T-cell (primary cell): ENCODE measurements at regions of chr6 and their contacts with region 1.

Region 1: GRCh38 chr6:153976921-153977693 is 61.9 kb upstream of the OPRM1 start:
- DNase-seq: no peak
- ATAC-seq: no peak
- H3K4me3 ChIP-seq: no peak overlapping the region
- H3K4me3 Mint-ChIP-seq: no peak overlapping the region
- H3K27ac ChIP-seq: no peak overlapping the region
- H3K27ac Mint-ChIP-seq: no peak overlapping the region
- H3K4me1 ChIP-seq: no peaks in the 10 kb centered on the region
- H3K4me1 Mint-ChIP-seq: peaks cover 0 to 6% (median 4%) of the 10 kb centered on the region in 3 donors
- H3K27me3 ChIP-seq: no peaks in the 10 kb centered on the region
- H3K27me3 Mint-ChIP-seq: peaks cover 0 to 2% of the 10 kb centered on the region in 2 donors

Region 2: DNA sequence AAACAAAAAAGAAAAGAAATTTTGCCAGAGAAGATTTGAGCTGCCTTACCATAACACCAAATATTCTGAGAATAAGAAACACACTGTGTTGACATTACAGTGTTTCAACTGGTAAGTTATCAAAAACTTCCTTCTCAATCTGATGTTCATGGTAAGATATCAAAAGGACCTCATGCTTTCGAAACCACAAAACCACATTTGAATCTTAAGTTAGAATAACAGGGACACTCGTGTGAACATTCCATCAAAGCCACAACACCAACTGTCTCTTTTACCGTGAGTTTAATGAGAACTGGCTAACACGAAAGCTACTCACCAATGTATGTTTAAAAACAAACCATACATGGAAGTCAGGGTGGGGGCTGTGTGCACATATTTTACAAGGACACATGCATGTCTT is 11.1 kb before region 1 on chr6:
- CTCF ChIA-PET with region 1: no interaction called
- POLR2A ChIA-PET with region 1: interaction called, 3 to 10 read pairs
- DNase-seq: peak in 1 of 35 experiments; percentile 23
- ATAC-seq: peak in 2 of 4 experiments; percentile 43 to 59
- H3K4me3 ChIP-seq: no peak overlapping the region
- H3K4me3 Mint-ChIP-seq: peak overlapping the region in 1 of 3 donors; percentile 20
- H3K27ac ChIP-seq: no peak overlapping the region
- H3K27ac Mint-ChIP-seq: no peak overlapping the region
- H3K4me1 ChIP-seq: peaks cover 4% of the 10 kb centered on the region in 2 experiments
- H3K4me1 Mint-ChIP-seq: peaks cover 10 to 35% (median 12%) of the 10 kb centered on the region in 3 donors
- H3K27me3 ChIP-seq: no peaks in the 10 kb centered on the region
- H3K27me3 Mint-ChIP-seq: no peaks in the 10 kb centered on the region

Region 3: DNA sequence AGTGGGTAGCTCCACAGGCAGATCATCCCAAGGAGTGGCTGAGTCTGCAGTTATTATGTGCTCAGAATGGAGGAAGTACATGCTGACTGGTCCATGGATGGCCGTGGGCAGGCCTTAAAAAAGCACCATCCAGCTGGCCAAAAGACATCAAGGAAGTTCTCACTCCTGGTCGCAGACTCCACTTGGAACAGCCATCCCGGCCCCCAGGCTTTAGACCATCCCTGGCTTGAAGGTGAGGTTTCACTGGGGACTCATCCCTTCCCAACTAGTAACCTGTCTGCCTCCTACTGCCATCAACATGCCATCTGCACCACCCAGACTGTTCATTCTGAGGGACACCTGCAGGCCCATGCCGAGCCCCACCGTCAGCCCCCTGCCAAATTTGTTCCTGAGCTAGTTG is 25.8 kb after region 1 on chr6:
- CTCF ChIA-PET with region 1: no interaction called
- POLR2A ChIA-PET with region 1: no interaction called
- DNase-seq: no peak
- ATAC-seq: no peak
- H3K4me3 ChIP-seq: no peak overlapping the region
- H3K4me3 Mint-ChIP-seq: no peak overlapping the region
- H3K27ac ChIP-seq: no peak overlapping the region
- H3K27ac Mint-ChIP-seq: no peak overlapping the region
- H3K4me1 ChIP-seq: no peaks in the 10 kb centered on the region
- H3K4me1 Mint-ChIP-seq: no peaks in the 10 kb centered on the region
- H3K27me3 ChIP-seq: peaks cover 0 to 11% of the 10 kb centered on the region in 2 experiments
- H3K27me3 Mint-ChIP-seq: peaks cover 5 to 7% of the 10 kb centered on the region in 2 donors